ENCODE measurements at regions of chr13 and their contacts with region 1.

Region 1: GRCh38 chr13:99269627-99270241 is 11.6 kb upstream of the GPR18 start:
- DNase-seq: no peak
- H3K4me3 ChIP-seq: no peak overlapping the region
- H3K27ac ChIP-seq: no peak overlapping the region
- H3K4me1 ChIP-seq: no peaks in the 10 kb centered on the region
- H3K27me3 ChIP-seq: no peaks in the 10 kb centered on the region
- CTCF ChIP-seq: peak in 2 of 3 experiments; percentile 48 to 53; a peak in 3 of 4 replicates
- EP300 ChIP-seq: no peak
- POLR2A ChIP-seq: no peak
- RAD21 ChIP-seq: peak; percentile 63 to 66

Region 2: GRCh38 chr13:98918771-98919170 is 351.0 kb before region 1 on chr13:
- CTCF ChIA-PET with region 1: no interaction called
- POLR2A ChIA-PET with region 1: no interaction called
- DNase-seq: no peak
- H3K4me3 ChIP-seq: no peak overlapping the region
- H3K27ac ChIP-seq: no peak overlapping the region
- H3K4me1 ChIP-seq: peaks cover 0 to 5% (median 2%) of the 10 kb centered on the region in 4 experiments; a peak in 3 of 7 replicates
- H3K27me3 ChIP-seq: no peaks in the 10 kb centered on the region
- CTCF ChIP-seq: no peak
- EP300 ChIP-seq: no peak
- POLR2A ChIP-seq: no peak
- RAD21 ChIP-seq: no peak

Region 3: GRCh38 chr13:99074324-99075092 is 195.2 kb before region 1 on chr13:
- CTCF ChIA-PET with region 1: no interaction called
- POLR2A ChIA-PET with region 1: no interaction called
- DNase-seq: no peak
- H3K4me3 ChIP-seq: no peak overlapping the region
- H3K27ac ChIP-seq: no peak overlapping the region
- H3K4me1 ChIP-seq: no peaks in the 10 kb centered on the region
- H3K27me3 ChIP-seq: no peaks in the 10 kb centered on the region
- CTCF ChIP-seq: no peak
- EP300 ChIP-seq: no peak
- POLR2A ChIP-seq: no peak
- RAD21 ChIP-seq: no peak

Region 4: GRCh38 chr13:99176309-99177276 is 93.1 kb before region 1 on chr13:
- CTCF ChIA-PET with region 1: interaction called, 242 read pairs
- POLR2A ChIA-PET with region 1: interaction called, 4 read pairs
- DNase-seq: peak; percentile 64 to 94
- H3K4me3 ChIP-seq: no peak overlapping the region
- H3K27ac ChIP-seq: no peak overlapping the region
- H3K4me1 ChIP-seq: no peaks in the 10 kb centered on the region
- H3K27me3 ChIP-seq: no peaks in the 10 kb centered on the region
- CTCF ChIP-seq: peak; percentile 96 to 97 (median 97)
- EP300 ChIP-seq: no peak
- POLR2A ChIP-seq: no peak
- RAD21 ChIP-seq: peak; percentile 98

Region 5: GRCh38 chr13:99208845-99209527 is 60.7 kb before region 1 on chr13:
- CTCF ChIA-PET with region 1: interaction called, 20 read pairs
- POLR2A ChIA-PET with region 1: no interaction called
- DNase-seq: peak in 1 of 2 experiments; percentile 46
- H3K4me3 ChIP-seq: no peak overlapping the region
- H3K27ac ChIP-seq: no peak overlapping the region
- H3K4me1 ChIP-seq: peaks cover 0 to 6% (median 1%) of the 10 kb centered on the region in 4 experiments; a peak in 4 of 7 replicates
- H3K27me3 ChIP-seq: no peaks in the 10 kb centered on the region
- CTCF ChIP-seq: no peak
- EP300 ChIP-seq: no peak
- POLR2A ChIP-seq: no peak
- RAD21 ChIP-seq: no peak

Region 6: DNA sequence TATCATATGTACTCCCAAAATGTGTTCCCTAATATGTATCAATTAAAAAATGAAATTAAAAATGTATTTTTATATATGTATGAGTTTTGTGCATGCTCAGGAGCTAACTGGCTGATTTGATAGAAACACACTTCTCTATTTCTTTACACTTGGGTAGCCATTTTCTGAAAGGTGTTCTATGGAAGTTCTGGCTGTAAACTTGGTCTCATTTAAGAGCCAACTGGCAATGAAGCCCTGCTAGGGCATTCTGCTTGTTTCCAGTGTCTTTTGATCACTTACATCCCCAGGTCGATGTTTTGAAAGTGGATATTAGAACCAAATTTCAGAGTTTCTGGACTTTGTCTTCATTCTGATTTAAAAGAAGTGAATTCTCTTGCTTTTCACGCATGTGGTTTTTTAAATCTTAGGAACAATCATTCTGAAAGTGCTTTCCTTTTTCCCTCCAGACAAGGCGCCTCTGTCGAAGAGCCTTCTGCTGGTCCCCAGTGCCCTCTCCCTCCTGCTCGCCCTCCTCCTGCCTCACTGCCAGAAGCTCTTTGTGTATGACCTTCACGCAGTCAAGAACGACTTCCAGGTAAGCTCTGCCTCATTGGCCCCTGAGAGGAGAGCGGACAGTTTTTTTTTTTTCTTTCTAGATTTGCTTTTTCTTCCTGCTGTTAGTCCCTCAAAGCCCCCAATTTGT is 31.6 kb before region 1 on chr13:
- CTCF ChIA-PET with region 1: no interaction called
- POLR2A ChIA-PET with region 1: no interaction called
- DNase-seq: no peak
- H3K4me3 ChIP-seq: no peak overlapping the region
- H3K27ac ChIP-seq: no peak overlapping the region
- H3K4me1 ChIP-seq: no peaks in the 10 kb centered on the region
- H3K27me3 ChIP-seq: no peaks in the 10 kb centered on the region
- CTCF ChIP-seq: no peak
- EP300 ChIP-seq: no peak
- POLR2A ChIP-seq: no peak
- RAD21 ChIP-seq: no peak

Region 7: DNA sequence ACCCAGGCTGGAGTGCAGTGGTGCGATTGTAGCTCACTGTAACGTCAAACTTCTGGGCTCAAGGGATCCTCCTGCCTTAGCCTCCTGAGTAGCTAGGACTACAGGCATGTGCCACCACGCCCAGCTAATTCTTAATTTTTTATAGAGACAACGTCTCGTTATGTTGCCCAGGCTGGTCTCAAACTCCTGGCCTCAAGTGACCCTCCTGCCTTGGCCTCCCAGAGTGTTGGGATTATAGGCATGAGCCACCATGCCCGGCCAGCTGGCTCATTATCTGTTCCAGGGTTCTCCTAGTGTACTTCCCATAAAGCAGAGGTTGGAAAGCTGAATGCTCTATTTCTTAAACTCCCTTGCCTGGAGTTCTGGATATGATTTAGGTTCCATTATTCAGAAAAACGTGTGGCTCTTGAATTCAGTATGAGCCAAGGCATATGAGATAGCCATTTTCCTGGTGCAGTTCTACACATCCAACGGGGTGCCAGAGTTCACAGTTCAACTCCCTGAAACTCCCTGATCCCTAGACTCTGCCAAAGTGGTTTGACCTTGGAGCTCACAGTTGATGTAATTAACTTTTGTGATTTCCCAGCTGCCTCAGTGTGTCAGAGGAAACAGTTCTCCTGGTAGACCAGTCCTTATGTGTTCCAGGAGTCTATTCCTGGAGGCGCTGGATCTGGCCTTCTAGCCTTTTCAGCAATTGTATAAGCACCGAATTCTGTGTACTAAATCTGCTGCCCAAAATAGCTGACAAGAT is 15.9 kb after region 1 on chr13:
- CTCF ChIA-PET with region 1: interaction called, 15 read pairs
- POLR2A ChIA-PET with region 1: no interaction called
- DNase-seq: no peak
- H3K4me3 ChIP-seq: no peak overlapping the region
- H3K27ac ChIP-seq: no peak overlapping the region
- H3K4me1 ChIP-seq: no peaks in the 10 kb centered on the region; a peak in 1 of 7 replicates
- H3K27me3 ChIP-seq: no peaks in the 10 kb centered on the region
- CTCF ChIP-seq: no peak
- EP300 ChIP-seq: no peak
- POLR2A ChIP-seq: no peak
- RAD21 ChIP-seq: no peak

Region 8: GRCh38 chr13:99374994-99375737 is 105.4 kb after region 1 on chr13:
- CTCF ChIA-PET with region 1: interaction called, 11 read pairs
- POLR2A ChIA-PET with region 1: no interaction called
- DNase-seq: peak in 1 of 2 experiments; percentile 43
- H3K4me3 ChIP-seq: no peak overlapping the region
- H3K27ac ChIP-seq: no peak overlapping the region
- H3K4me1 ChIP-seq: peaks cover 0 to 16% (median 2%) of the 10 kb centered on the region in 4 experiments; a peak in 6 of 7 replicates
- H3K27me3 ChIP-seq: no peaks in the 10 kb centered on the region
- CTCF ChIP-seq: no peak
- EP300 ChIP-seq: no peak
- POLR2A ChIP-seq: no peak
- RAD21 ChIP-seq: no peak

Region 9: DNA sequence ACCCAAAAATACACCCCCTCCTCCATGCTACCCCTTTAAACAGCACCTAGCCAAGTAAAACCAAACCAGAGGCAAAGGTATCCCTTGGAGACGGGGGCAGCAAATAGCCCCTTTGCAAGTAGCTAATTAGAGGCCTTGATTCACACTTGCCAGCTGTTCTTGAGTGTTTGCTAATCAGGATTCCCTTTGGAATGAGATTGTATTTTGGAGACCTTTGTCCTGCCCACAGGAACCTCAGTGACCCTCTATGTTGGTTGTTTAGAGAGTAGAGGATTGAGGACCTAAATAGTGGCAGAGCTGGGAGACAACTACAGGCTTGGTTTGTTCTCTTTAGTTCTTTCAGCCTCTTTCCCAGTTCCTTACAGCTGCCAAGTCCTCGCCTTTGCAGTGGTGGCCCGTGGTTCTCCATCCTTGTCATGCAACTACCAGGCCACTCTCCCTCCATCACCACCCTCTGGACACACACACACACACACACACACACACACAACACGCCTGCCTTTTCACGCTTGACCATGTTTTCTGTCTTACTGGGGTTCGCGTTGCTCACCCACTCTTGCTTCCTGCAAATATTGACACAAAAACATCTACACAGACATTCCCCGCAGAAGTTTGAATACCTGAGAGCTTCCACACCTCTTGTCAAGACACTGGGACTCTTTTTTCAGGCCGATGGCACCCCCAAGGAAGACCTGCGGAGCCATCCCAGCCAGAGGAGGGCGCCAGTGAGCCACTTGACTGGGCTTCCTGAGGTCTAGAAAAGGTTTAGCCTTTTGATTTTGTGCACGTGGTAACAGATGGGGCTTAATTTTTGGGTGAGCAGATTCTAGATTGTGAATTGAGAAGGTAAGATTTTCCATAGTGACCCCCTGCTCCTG is 117.4 kb after region 1 on chr13:
- CTCF ChIA-PET with region 1: interaction called, 20 read pairs
- POLR2A ChIA-PET with region 1: no interaction called
- DNase-seq: peak; percentile 31 to 95
- H3K4me3 ChIP-seq: no peak overlapping the region
- H3K27ac ChIP-seq: no peak overlapping the region
- H3K4me1 ChIP-seq: peaks cover 0 to 14% (median 3%) of the 10 kb centered on the region in 4 experiments; a peak in 3 of 7 replicates
- H3K27me3 ChIP-seq: no peaks in the 10 kb centered on the region
- CTCF ChIP-seq: peak; percentile 88 to 98 (median 88)
- EP300 ChIP-seq: no peak
- POLR2A ChIP-seq: no peak
- RAD21 ChIP-seq: peak; percentile 85 to 90

Measured in H1 (cell line).